ENCODE measurements at regions of chr3 and their contacts with region 1.

Region 1: DNA sequence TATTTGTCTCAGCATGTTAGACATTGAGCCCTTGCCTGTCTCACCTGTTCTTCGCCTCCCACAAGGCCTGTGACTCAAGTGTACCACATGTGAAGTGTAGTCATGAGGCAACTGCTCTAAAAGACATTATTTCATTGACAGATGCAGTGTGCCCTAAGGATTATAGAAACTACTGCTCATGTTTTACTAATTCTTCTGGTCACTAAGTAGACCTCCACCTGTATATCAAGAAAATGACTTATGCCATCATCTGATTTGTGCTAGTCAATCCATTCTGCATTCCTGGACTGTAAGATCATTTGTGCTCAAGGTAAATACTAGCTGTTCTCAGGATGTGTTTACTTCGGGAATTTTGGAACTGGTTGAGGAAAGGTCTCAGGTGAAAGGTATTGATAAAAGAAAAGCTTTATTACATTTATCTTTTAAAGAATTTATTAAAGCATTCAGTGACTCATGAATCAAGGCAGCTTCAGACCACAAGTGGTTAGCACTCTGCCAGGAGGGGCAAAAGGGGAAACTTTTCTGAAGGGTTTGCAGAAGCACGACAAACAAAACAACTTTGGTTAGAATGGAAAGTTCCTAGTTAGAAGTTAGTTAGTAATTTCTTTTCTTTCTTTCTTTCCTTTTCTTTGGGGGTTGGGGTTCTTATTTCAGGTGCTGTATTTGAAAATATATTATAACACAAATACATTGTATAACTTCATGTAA is 465.3 kb upstream of the CBLB start:
- DNase-seq: peak; percentile 51
- H3K4me3 Mint-ChIP-seq: peak overlapping the region; percentile 60
- H3K27ac Mint-ChIP-seq: peak overlapping the region; percentile 95
- H3K4me1 Mint-ChIP-seq: peaks cover 43% of the 10 kb centered on the region
- H3K27me3 Mint-ChIP-seq: no peaks in the 10 kb centered on the region
- CTCF ChIP-seq: no peak

Region 2: DNA sequence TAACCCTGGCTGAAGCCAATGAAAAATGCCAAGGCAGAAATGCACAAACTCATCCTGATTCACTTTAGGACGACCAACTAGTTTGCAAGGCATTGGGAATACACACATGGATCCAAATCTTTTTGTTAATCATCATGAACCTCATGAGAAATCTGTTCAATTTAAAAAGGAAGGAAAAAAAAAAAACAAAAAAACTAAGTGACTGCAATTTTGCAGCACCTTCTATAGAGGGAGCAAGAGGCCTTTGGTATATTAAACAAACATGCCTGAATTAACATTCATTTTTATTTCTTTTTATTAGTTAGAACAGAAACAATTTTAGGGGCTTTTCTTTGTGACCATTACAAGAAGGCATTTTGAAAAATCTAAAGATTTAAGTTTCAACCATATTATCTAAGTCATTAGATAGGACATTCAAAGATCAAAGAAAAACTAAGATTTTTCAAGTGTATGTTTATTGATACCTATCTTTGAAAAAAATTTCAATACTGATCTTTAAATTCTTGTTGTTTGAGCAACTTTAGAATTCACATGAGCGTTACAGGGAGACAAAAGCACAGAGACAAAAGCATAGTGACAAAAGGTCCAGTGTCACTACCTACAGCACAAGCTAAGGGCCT is 647.7 kb before region 1 on chr3:
- CTCF ChIA-PET with region 1: no interaction called
- intact Hi-C with region 1: loop called (anchors 5 kb)
- DNase-seq: no peak
- H3K4me3 Mint-ChIP-seq: no peak overlapping the region
- H3K27ac Mint-ChIP-seq: no peak overlapping the region
- H3K4me1 Mint-ChIP-seq: no peaks in the 10 kb centered on the region
- H3K27me3 Mint-ChIP-seq: no peaks in the 10 kb centered on the region
- CTCF ChIP-seq: peak; percentile 42

Region 3: GRCh38 chr3:106025151-106025722 is 308.8 kb before region 1 on chr3:
- CTCF ChIA-PET with region 1: no interaction called
- intact Hi-C with region 1: loop called (anchors 10 kb)
- DNase-seq: no peak
- H3K4me3 Mint-ChIP-seq: no peak overlapping the region
- H3K27ac Mint-ChIP-seq: no peak overlapping the region
- H3K4me1 Mint-ChIP-seq: peaks cover 18% of the 10 kb centered on the region
- H3K27me3 Mint-ChIP-seq: no peaks in the 10 kb centered on the region
- CTCF ChIP-seq: no peak

Region 4: DNA sequence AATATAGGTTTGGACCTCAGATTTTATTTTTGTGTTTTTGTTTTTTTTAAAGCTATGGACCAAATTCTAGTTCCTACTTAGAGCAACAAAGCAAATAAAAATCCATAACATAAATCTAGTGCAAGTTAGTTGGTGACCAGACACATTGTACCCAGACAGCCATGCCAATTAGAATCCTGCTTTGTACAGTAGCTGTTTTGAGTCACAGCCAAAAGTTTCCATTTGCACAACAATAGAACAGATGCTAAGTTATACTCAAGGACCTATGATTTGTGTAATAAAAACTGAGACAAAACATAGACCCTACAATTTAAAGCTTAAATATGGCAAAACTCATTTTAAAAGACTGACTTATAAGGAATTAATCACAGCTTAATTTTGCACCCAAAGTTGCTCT is 47.9 kb after region 1 on chr3:
- CTCF ChIA-PET with region 1: no interaction called
- intact Hi-C with region 1: no loop called
- DNase-seq: no peak
- H3K4me3 Mint-ChIP-seq: no peak overlapping the region
- H3K27ac Mint-ChIP-seq: no peak overlapping the region
- H3K4me1 Mint-ChIP-seq: no peaks in the 10 kb centered on the region
- H3K27me3 Mint-ChIP-seq: no peaks in the 10 kb centered on the region
- CTCF ChIP-seq: no peak

Region 5: GRCh38 chr3:106609666-106610301 is 275.7 kb after region 1 on chr3:
- CTCF ChIA-PET with region 1: no interaction called
- intact Hi-C with region 1: loop called (anchors 2 kb)
- DNase-seq: peak; percentile 69
- H3K4me3 Mint-ChIP-seq: no peak overlapping the region
- H3K27ac Mint-ChIP-seq: no peak overlapping the region
- H3K4me1 Mint-ChIP-seq: peaks cover 23% of the 10 kb centered on the region
- H3K27me3 Mint-ChIP-seq: no peaks in the 10 kb centered on the region
- CTCF ChIP-seq: peak; percentile 52

Region 6: GRCh38 chr3:107064445-107065060 is 730.5 kb after region 1 on chr3:
- CTCF ChIA-PET with region 1: interaction called, 3 read pairs
- intact Hi-C with region 1: loop called (anchors 10 kb)
- DNase-seq: peak; percentile 81
- H3K4me3 Mint-ChIP-seq: no peak overlapping the region
- H3K27ac Mint-ChIP-seq: no peak overlapping the region
- H3K4me1 Mint-ChIP-seq: peaks cover 37% of the 10 kb centered on the region
- H3K27me3 Mint-ChIP-seq: no peaks in the 10 kb centered on the region
- CTCF ChIP-seq: peak; percentile 44